CD8-positive, alpha-beta T cell (primary cell): ENCODE measurements at regions of chr7 and their contacts with region 1.

Region 1: DNA sequence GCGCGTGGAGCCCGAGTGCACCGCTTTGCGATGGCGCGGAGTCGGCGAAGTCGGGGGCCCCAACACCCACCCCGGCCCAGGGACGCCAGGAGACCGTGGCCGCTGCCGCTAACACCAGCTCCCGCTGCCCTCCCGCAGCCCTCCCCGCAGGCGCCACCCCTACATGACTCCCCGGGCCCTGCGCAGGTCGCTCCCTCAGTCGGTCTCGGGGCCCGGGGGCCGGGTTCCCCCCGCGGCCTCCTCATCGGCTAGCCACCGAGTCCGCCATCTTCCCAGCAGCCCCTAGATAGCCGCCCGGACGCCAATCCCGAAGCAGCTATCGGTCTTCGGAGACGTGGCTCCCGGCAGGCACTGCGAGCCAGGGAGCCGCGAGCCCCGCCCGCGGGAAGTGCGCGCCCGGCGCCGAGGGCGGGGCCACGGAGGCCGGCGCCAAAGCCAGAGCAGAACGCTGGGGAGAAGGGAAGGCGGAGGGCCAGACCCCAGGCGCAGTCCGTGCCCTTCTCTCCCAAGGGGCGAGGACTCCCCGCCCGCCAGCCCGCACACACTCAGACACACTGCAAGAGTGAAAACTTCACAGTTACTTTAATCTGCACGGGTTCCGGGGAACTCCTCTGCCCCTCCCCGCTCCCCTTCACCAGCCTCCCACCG is at the start of gene FASTK:
- DNase-seq: peak; percentile 71 to 95 (median 87)
- ATAC-seq: peak; percentile 65
- H3K4me3 ChIP-seq: peak within 1 kb of the TSS; percentile 74 to 95
- H3K4me3 Mint-ChIP-seq: peak within 1 kb of the TSS; percentile 85
- H3K27ac ChIP-seq: peak within 1 kb of the TSS; percentile 74 to 91
- H3K27ac Mint-ChIP-seq: peak within 1 kb of the TSS; percentile 85
- H3K4me1 ChIP-seq: peaks cover 57% of the 10 kb centered on the region
- H3K4me1 Mint-ChIP-seq: peaks cover 45% of the 10 kb centered on the region
- H3K27me3 ChIP-seq: no peaks in the 10 kb centered on the region
- H3K27me3 Mint-ChIP-seq: peaks cover 10% of the 10 kb centered on the region
- CTCF ChIP-seq: no peak
- total RNA-seq, gene FASTK: 56.3 to 62.9 TPM

Region 2: DNA sequence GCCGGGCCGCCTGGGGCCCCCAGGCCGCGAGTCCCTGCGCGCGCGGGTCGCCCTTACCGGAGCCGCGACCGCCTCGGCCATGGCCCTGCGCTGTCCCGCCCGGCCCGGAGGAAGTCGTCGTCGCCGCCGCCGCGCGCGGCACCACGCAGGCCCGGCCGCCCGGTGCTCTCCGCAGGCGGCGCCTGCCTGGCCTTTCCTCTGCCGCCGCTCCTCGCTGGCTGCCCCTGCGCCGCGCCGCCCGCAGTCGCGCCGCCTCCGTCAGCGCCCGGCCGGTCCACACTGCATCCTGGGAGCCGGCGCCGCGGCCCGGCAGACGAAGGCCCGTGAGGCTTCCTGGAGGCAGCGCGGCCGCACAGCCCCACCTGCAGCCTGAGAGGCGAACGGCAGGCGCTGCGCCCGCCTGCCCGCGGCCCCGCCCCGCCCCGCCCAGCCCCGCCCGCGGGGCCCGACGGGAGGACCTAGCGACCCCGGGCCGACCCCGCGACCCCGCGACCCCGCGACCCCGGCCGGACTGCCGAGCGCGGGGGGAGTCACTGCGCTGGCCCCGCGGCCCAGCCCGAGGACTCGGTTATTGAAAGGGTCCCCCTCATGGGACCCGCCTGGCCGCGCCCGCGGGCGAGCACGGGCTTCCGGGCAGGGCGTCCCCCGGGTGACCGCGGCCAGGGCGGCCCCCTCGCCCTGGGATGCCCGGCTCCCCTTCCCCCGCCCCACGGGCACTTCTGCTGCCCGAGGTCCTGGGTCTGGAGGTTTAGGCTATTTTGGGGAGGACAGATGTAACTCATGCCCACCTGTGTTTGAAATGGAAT is 1583.0 kb before region 1 on chr7 and contains the start of gene ZNF746:
- CTCF ChIA-PET with region 1: no interaction called
- POLR2A ChIA-PET with region 1: no interaction called
- intact Hi-C with region 1: loop called in 1 of 2 experiments (anchors 5 kb)
- DNase-seq: peak; percentile 59 to 91 (median 78)
- ATAC-seq: peak; percentile 93
- H3K4me3 ChIP-seq: peak within 1 kb of the TSS; percentile 56 to 71
- H3K4me3 Mint-ChIP-seq: peak within 1 kb of the TSS; percentile 95
- H3K27ac ChIP-seq: peak within 1 kb of the TSS; percentile 40 to 51
- H3K27ac Mint-ChIP-seq: peak within 1 kb of the TSS; percentile 94
- H3K4me1 ChIP-seq: peaks cover 19% of the 10 kb centered on the region
- H3K4me1 Mint-ChIP-seq: peaks cover 32% of the 10 kb centered on the region
- H3K27me3 ChIP-seq: no peaks in the 10 kb centered on the region
- H3K27me3 Mint-ChIP-seq: no peaks in the 10 kb centered on the region
- CTCF ChIP-seq: peak; percentile 33
- total RNA-seq, gene ZNF746: 28.4 to 31.1 TPM

Region 3: DNA sequence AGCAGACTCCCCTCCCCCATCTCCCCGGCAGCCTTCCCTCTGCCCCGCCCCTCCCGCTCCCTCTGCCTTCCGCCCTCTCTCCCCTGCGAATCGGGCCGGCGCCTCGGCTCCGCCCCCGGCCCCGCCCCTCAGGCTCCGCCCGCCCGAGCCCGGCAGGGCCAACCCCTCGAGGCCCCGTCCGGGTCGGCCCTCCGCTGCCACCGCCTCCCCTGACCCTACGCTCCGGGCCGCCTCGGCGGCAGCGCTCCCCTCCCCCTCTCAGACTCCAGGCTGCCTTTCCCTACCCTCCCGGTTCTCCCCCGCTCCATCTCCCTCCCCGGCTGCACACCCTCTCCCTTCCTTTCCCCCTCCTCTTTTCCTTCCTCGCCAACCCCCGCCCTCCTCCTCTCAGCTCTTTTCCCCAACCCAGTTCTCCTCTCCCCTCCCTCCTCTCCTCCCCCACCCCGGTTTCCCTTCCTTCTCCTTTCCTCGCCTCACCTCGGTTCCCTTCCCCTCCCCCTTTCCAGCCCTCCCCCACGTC is 1308.9 kb before region 1 on chr7:
- CTCF ChIA-PET with region 1: no interaction called
- POLR2A ChIA-PET with region 1: no interaction called
- intact Hi-C with region 1: loop called in 1 of 2 experiments (anchors 10 kb)
- DNase-seq: peak; percentile 70 to 91 (median 84)
- ATAC-seq: peak; percentile 88
- H3K4me3 ChIP-seq: peak overlapping the region; percentile 63 to 66
- H3K4me3 Mint-ChIP-seq: peak overlapping the region; percentile 71
- H3K27ac ChIP-seq: no peak overlapping the region
- H3K27ac Mint-ChIP-seq: no peak overlapping the region
- H3K4me1 ChIP-seq: peaks cover 12% of the 10 kb centered on the region
- H3K4me1 Mint-ChIP-seq: peaks cover 6% of the 10 kb centered on the region
- H3K27me3 ChIP-seq: no peaks in the 10 kb centered on the region
- H3K27me3 Mint-ChIP-seq: no peaks in the 10 kb centered on the region
- CTCF ChIP-seq: no peak

Region 4: DNA sequence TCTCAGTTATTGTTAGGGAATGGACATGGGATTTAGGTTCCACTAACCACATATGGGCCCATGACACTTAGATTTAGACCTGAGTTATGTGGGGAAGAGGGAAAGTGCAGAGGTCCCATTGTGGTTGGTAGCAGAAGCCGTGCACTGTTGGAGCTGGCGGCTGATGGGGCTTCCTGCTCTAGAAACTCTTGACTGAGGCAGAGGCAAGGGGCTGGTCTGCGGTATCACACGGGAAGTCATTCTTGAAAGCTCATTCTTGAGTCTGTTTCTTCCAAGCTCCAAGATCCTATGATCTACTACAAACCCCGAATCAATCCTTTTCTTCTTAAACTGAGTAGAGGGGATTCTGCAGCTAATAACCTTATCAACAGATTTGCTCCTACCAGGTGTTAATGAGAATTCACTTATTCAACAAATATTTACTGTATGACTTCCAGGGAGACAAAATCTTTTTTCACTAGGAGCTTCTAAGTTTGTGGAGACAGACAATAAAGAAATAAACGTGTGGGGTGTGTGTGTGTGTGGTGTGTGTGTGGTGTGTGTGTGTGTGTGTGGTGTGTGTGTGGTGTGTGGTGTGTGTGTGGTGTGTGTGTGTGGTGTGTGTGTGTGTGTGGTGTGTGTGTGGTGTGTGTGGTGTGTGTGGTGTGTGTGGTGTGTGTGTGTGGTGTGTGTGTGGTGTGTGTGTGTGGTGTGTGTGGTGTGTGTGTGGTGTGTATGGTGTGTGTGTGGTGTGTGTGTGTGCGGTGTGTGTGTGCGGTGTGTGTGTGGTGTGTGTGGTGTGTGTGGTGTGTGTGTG is 171.2 kb before region 1 on chr7:
- CTCF ChIA-PET with region 1: no interaction called
- POLR2A ChIA-PET with region 1: no interaction called
- intact Hi-C with region 1: no loop called
- DNase-seq: peak; percentile 16 to 77 (median 45)
- ATAC-seq: peak; percentile 81
- H3K4me3 ChIP-seq: no peak overlapping the region
- H3K4me3 Mint-ChIP-seq: peak overlapping the region; percentile 26
- H3K27ac ChIP-seq: no peak overlapping the region
- H3K27ac Mint-ChIP-seq: no peak overlapping the region
- H3K4me1 ChIP-seq: peaks cover 12% of the 10 kb centered on the region
- H3K4me1 Mint-ChIP-seq: peaks cover 14% of the 10 kb centered on the region
- H3K27me3 ChIP-seq: peaks cover 0 to 14% of the 10 kb centered on the region in 2 experiments
- H3K27me3 Mint-ChIP-seq: peaks cover 4% of the 10 kb centered on the region
- CTCF ChIP-seq: no peak

Region 5: GRCh38 chr7:150974468-150975391 is 105.9 kb before region 1 on chr7:
- CTCF ChIA-PET with region 1: no interaction called
- POLR2A ChIA-PET with region 1: no interaction called
- intact Hi-C with region 1: loop called in 1 of 2 experiments (anchors 10 kb)
- DNase-seq: peak; percentile 70 to 90 (median 80)
- ATAC-seq: peak; percentile 77
- H3K4me3 ChIP-seq: peak overlapping the region; percentile 63 to 69
- H3K4me3 Mint-ChIP-seq: peak overlapping the region; percentile 84
- H3K27ac ChIP-seq: peak overlapping the region; percentile 24 to 82
- H3K27ac Mint-ChIP-seq: peak overlapping the region; percentile 89
- H3K4me1 ChIP-seq: peaks cover 43% of the 10 kb centered on the region
- H3K4me1 Mint-ChIP-seq: peaks cover 38% of the 10 kb centered on the region
- H3K27me3 ChIP-seq: peaks cover 17 to 20% of the 10 kb centered on the region in 2 experiments
- H3K27me3 Mint-ChIP-seq: peaks cover 18% of the 10 kb centered on the region
- CTCF ChIP-seq: peak; percentile 24

Region 6: GRCh38 chr7:151028131-151028947 is 52.3 kb before region 1 on chr7 and contains the start of gene ABCB8:
- CTCF ChIA-PET with region 1: no interaction called
- POLR2A ChIA-PET with region 1: interaction called, 5 read pairs
- intact Hi-C with region 1: loop called (anchors 1 kb)
- DNase-seq: peak; percentile 93 to 99 (median 98)
- ATAC-seq: peak; percentile 92
- H3K4me3 ChIP-seq: peak within 1 kb of the TSS; percentile 67 to 75
- H3K4me3 Mint-ChIP-seq: peak within 1 kb of the TSS; percentile 96
- H3K27ac ChIP-seq: peak within 1 kb of the TSS; percentile 94 to 96
- H3K27ac Mint-ChIP-seq: peak within 1 kb of the TSS; percentile 99
- H3K4me1 ChIP-seq: peaks cover 12% of the 10 kb centered on the region
- H3K4me1 Mint-ChIP-seq: peaks cover 24% of the 10 kb centered on the region
- H3K27me3 ChIP-seq: no peaks in the 10 kb centered on the region
- H3K27me3 Mint-ChIP-seq: no peaks in the 10 kb centered on the region
- CTCF ChIP-seq: peak; percentile 35
- total RNA-seq, gene ABCB8: 43.6 to 49.3 TPM

Region 7: DNA sequence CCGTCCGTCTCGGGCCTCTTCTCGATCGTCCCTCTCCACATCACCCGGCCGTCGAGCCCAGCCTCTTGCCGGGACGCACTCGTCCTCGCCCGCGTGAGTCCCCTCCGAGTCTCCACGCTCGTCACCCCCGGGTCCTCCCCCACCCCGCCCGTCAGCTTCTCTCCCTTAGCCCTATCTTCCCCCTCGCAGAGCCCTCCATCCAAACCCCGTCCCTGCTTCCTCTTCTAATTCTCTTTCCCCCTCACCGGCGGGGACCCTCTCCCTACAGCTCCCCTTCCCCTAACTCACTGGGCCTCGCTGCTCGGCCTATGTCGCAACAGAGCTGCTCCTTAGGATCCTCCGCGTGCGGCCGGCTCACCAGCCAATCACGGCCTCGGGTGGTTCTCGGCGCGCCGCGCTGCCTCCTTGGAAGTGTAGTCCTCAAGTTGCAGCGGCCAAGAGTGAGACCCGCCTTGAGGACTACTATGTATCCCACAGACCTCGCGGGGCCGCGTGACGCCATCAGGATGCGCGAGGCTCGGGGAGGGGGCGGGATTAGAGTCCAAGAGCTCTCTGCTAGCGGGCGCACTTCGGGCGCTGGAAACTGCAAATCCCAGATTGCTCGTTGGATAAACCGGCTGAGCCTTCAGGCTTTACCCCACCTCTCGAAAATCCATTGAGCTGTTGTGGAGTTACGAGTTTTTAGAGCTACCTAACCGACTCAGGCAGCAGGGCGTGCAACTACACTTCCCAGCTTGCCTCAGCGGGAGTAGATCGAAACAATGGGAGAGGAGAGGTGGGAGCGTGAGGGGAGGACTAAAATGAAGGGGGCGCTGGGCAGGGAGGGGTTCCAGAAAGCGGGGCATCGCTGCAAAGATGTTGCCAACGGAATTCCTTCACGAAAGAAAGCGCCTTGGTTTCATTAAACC is 146.5 kb after region 1 on chr7 and contains the start of gene ABCF2:
- CTCF ChIA-PET with region 1: no interaction called
- POLR2A ChIA-PET with region 1: interaction called, 3 read pairs
- intact Hi-C with region 1: loop called in 1 of 2 experiments (anchors 1 kb)
- DNase-seq: peak; percentile 94 to 99 (median 98)
- ATAC-seq: peak; percentile 98
- H3K4me3 ChIP-seq: peak within 1 kb of the TSS; percentile 69 to 84
- H3K4me3 Mint-ChIP-seq: peak within 1 kb of the TSS; percentile 100
- H3K27ac ChIP-seq: peak within 1 kb of the TSS; percentile 67 to 79
- H3K27ac Mint-ChIP-seq: peak within 1 kb of the TSS; percentile 97
- H3K4me1 ChIP-seq: peaks cover 27% of the 10 kb centered on the region
- H3K4me1 Mint-ChIP-seq: peaks cover 48% of the 10 kb centered on the region
- H3K27me3 ChIP-seq: no peaks in the 10 kb centered on the region
- H3K27me3 Mint-ChIP-seq: no peaks in the 10 kb centered on the region
- CTCF ChIP-seq: no peak
- total RNA-seq, gene ABCF2: 12.7 to 16.5 TPM

Region 8: DNA sequence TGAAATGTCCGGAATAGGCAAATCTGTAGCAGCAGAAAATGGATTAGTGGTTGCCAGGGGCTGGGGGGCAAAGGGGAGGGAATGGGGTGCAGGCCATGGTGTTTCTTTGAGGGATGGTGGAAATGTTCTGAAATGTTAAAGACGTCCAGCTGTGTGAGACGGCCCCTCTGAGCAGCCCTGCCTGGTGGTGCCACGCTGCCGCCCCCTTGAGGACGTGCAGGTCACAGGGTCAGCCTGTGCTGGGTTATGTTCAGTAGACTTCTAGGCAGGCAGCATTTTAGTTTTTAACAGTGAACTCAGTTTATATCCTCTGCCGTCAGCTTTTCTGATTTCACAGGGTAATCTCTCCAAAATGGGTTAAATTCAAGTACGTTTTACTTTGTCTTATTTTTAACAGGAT is 270.4 kb after region 1 on chr7:
- CTCF ChIA-PET with region 1: no interaction called
- POLR2A ChIA-PET with region 1: no interaction called
- intact Hi-C with region 1: loop called in 1 of 2 experiments (anchors 2 kb)
- DNase-seq: peak in 4 of 9 experiments; percentile 29 to 59 (median 46)
- ATAC-seq: no peak
- H3K4me3 ChIP-seq: no peak overlapping the region
- H3K4me3 Mint-ChIP-seq: peak overlapping the region; percentile 22
- H3K27ac ChIP-seq: peak overlapping the region; percentile 45 to 98
- H3K27ac Mint-ChIP-seq: peak overlapping the region; percentile 89
- H3K4me1 ChIP-seq: peaks cover 39% of the 10 kb centered on the region
- H3K4me1 Mint-ChIP-seq: peaks cover 57% of the 10 kb centered on the region
- H3K27me3 ChIP-seq: no peaks in the 10 kb centered on the region
- H3K27me3 Mint-ChIP-seq: no peaks in the 10 kb centered on the region
- CTCF ChIP-seq: no peak